ENCODE measurements at regions of chr22 and their contacts with region 1.

Region 1: GRCh38 chr22:44536411-44536810 is 38.4 kb upstream of the RTL6 start:
- DNase-seq: no peak
- H3K4me3 ChIP-seq: no peak overlapping the region
- H3K27ac ChIP-seq: no peak overlapping the region
- H3K4me1 ChIP-seq: no peaks in the 10 kb centered on the region; a peak in 2 of 7 replicates
- H3K27me3 ChIP-seq: no peaks in the 10 kb centered on the region; a peak in 1 of 7 replicates
- CTCF ChIP-seq: no peak
- EP300 ChIP-seq: no peak
- POLR2A ChIP-seq: no peak
- RAD21 ChIP-seq: no peak

Region 2: GRCh38 chr22:44567846-44568493 is 31.6 kb after region 1 on chr22:
- CTCF ChIA-PET with region 1: interaction called, 10 read pairs
- POLR2A ChIA-PET with region 1: no interaction called
- DNase-seq: no peak
- H3K4me3 ChIP-seq: no peak overlapping the region
- H3K27ac ChIP-seq: no peak overlapping the region
- H3K4me1 ChIP-seq: no peaks in the 10 kb centered on the region
- H3K27me3 ChIP-seq: no peaks in the 10 kb centered on the region
- CTCF ChIP-seq: peak; percentile 47 to 76 (median 59); a peak in 3 of 4 replicates
- EP300 ChIP-seq: no peak
- POLR2A ChIP-seq: no peak
- RAD21 ChIP-seq: peak; percentile 55 to 68